ENCODE measurements at regions of chr16 and their contacts with region 1.

Region 1: GRCh38 chr16:30637942-30638341 is 12.8 kb upstream of the PRR14 start:
- DNase-seq: no peak
- H3K4me3 ChIP-seq: no peak overlapping the region
- H3K27ac ChIP-seq: no peak overlapping the region
- H3K4me1 ChIP-seq: peaks cover 0 to 21% (median 12%) of the 10 kb centered on the region in 4 donors
- H3K27me3 ChIP-seq: no peaks in the 10 kb centered on the region
- CTCF ChIP-seq: no peak

Region 2: DNA sequence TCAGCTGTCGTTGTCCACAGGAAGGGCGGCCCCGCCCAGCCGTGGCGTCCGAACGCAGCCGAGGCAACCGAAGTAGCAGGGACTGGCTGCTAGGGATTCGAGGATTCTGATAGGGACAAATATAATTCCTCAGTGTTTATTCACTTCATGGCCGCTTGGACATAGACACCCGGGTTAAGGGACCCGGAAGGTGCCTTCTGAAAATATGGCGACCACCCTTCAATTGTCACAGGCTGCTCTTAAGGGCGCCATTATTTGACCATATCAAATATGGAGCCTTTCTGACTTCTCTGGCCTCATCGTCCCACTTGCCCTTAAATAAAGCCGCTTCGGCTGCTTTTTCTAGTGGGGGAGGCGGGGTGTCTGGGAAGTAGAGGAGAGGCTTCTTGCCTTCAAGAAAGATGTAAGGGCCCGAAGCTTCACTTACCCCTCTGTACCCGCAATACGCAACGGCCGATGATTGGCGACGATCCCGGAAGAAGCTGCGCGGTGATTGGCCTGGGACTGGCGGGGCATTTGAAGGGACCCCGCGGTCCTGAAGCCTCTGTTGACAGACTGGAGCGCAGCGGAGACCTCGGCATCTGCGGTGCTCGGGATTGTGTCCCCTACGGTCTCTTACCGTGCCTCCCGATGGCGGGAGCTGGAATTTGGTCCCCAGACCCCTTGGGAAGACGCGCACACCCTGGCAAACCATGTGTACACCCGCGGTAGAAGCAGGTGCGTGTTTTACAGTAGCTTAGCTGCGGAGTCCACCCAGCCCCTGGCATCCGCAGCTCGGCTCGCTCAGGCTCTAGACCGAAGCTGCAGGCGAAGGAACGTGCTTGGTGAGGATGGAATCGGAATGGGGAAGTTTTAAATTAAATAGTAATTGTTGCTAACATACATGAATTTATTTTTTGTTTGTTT is 66.0 kb before region 1 on chr16 and contains the start of gene ZNF688:
- intact Hi-C with region 1: loop called (anchors 10 kb)
- DNase-seq: peak; percentile 98 to 99
- H3K4me3 ChIP-seq: peak within 1 kb of the TSS; percentile 82 to 95
- H3K27ac ChIP-seq: peak within 1 kb of the TSS; percentile 97 to 98
- H3K4me1 ChIP-seq: peaks cover 0 to 24% (median 22%) of the 10 kb centered on the region in 4 donors
- H3K27me3 ChIP-seq: no peaks in the 10 kb centered on the region
- CTCF ChIP-seq: peak in 1 of 2 experiments; percentile 38